ENCODE measurements at regions of chr11 and their contacts with region 1.

Region 1: GRCh38 chr11:102914238-102915043 is 39.7 kb upstream of the MMP12 start:
- DNase-seq: peak; percentile 42
- H3K27ac ChIP-seq: no peak overlapping the region
- CTCF ChIP-seq: peak; percentile 63

Region 2: DNA sequence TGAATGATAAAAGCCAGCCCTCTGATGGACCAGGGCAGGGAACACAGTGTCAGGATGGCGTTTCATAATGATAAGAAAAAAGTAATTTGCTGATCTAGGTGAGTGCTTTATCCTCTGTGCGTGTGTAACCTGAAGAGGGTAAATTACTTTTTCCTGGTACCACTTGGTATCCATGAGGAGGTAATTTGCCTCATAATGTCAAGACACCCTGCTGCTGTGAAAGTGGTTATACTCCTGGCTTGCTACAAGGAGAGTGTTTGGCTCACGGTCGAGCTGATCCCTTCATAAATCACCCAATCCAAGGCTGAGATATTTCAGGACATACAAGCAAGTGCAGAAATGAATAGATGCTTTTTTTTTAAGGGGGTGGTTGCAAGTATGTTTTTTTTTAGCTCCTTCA is 1577.6 kb before region 1 on chr11:
- CTCF ChIA-PET with region 1: no interaction called
- POLR2A ChIA-PET with region 1: no interaction called
- DNase-seq: no peak
- H3K27ac ChIP-seq: no peak overlapping the region
- CTCF ChIP-seq: no peak

Region 3: DNA sequence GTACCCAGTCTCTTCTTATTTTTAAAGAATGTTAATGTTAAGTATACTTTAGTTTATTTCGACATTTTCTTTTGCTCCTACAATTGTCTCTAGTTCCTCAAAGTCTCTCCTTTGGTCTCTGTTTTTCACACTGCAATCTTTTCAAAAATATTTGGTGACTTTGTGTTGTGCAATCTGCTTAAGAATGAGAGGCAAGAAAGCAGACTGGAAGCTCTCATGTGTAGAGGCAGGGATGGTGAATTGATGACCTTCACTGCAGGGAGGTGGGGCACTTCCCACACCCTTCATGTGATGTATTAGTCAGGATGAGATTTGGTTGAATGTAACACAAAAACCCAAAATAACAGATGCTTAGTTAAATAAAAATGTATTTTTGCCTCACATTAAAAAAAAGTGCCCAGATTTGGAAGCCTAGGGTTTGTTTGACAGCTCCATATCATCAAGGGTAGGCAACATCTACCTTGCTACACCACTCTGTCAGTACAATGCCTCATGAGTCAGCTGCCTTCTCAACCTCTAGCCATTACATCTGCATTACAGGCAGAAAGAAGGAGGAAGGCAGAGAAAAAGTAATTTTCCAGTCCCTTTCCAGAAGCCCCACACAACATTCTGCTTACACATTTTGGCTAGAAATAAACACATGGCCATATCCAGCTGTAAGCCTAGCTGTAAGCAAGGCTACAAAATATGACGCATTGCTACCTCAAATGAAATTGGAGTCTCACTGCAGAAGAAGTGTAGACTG is 205.1 kb before region 1 on chr11:
- CTCF ChIA-PET with region 1: no interaction called
- POLR2A ChIA-PET with region 1: no interaction called
- DNase-seq: no peak
- H3K27ac ChIP-seq: no peak overlapping the region
- CTCF ChIP-seq: no peak

Region 4: DNA sequence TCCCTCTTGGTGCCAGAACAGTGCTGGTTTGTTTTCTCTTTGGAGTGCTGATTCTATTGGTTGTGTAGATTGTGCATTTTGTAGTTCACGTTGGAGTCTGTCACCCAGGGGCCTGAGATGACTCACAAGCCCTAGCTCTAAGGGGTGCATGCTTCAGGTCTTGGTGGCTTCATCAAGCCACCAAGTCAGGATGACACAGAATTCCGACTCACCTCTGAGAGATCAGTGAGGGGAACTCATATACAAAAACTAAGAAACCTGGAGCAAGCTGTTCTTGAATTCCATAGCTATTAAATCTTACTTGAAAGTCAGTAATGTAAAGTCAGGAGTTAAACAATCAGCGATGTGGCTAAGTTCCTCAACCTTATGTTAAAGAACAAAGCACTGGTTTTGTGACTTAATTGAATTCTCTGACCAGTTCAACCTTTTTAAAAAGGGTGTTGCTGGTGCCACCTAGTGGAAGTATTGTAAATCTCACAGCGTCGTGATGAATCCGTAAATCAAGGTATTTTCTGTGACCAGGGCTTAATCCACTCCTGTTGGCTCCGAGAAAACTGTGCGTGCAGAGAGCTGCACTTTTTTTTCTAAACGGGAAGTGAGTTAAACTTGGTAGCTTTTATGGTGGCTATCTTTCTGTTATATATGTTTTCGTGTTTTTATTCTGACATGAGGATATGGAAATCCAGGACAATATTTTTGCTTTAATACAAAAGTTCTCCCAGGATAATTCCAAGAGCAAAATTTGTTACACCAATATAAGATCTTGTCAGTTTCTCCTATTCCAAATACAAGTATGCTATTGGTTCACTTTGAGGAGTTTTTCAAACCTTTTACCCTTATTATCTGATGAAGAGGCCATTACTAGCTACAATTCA is 26.5 kb after region 1 on chr11:
- CTCF ChIA-PET with region 1: interaction called, 10 read pairs
- POLR2A ChIA-PET with region 1: no interaction called
- DNase-seq: peak; percentile 72
- H3K27ac ChIP-seq: no peak overlapping the region
- CTCF ChIP-seq: peak; percentile 83

Region 5: GRCh38 chr11:103294516-103294915 is 380.1 kb after region 1 on chr11:
- CTCF ChIA-PET with region 1: no interaction called
- POLR2A ChIA-PET with region 1: no interaction called
- DNase-seq: no peak
- H3K27ac ChIP-seq: no peak overlapping the region
- CTCF ChIP-seq: no peak

Measured in RWPE1 (cell line).